ENCODE measurements at regions of chr17 and their contacts with region 1.

Region 1: GRCh38 chr17:56819431-56820145 is 14.1 kb downstream of the C17orf67 start:
- DNase-seq: peak; percentile 69 to 78 (median 71)
- H3K4me3 ChIP-seq: no peak overlapping the region
- H3K4me3 Mint-ChIP-seq: no peak overlapping the region
- H3K27ac ChIP-seq: no peak overlapping the region
- H3K27ac Mint-ChIP-seq: peak overlapping the region in 1 of 7 donors; percentile 29
- H3K4me1 ChIP-seq: peaks cover 4% of the 10 kb centered on the region
- H3K4me1 Mint-ChIP-seq: peaks cover 0 to 6% (median 4%) of the 10 kb centered on the region in 4 donors
- H3K27me3 ChIP-seq: no peaks in the 10 kb centered on the region
- H3K27me3 Mint-ChIP-seq: no peaks in the 10 kb centered on the region

Region 2: DNA sequence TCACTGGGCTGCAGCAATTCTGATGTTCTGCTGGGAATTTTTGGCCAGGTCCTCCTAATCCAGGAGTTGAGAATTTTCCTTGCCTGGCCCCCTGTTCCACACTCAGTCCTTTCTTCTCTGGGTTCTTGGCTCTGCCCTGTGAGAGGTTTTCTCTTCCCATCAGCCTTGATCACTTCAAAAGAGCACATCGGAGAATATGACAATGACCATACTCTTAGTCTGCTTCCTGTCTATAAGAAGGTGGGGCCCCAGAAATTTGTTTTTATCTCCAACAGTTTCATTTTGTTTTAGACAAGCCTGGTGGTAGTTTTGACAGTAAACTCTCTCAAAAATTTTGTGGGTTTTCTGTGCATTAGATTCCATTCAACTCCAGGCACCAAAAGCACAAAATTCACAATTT is 56.6 kb before region 1 on chr17:
- CTCF ChIA-PET with region 1: no interaction called
- POLR2A ChIA-PET with region 1: no interaction called
- intact Hi-C with region 1: no loop called
- DNase-seq: no peak
- H3K4me3 ChIP-seq: no peak overlapping the region
- H3K4me3 Mint-ChIP-seq: peak overlapping the region in 1 of 8 donors; percentile 48
- H3K27ac ChIP-seq: no peak overlapping the region
- H3K27ac Mint-ChIP-seq: peak overlapping the region in 1 of 7 donors; percentile 74
- H3K4me1 ChIP-seq: no peaks in the 10 kb centered on the region
- H3K4me1 Mint-ChIP-seq: peaks cover 0 to 6% (median 2%) of the 10 kb centered on the region in 4 donors
- H3K27me3 ChIP-seq: peaks cover 4% of the 10 kb centered on the region
- H3K27me3 Mint-ChIP-seq: peaks cover 1 to 7% of the 10 kb centered on the region in 2 donors

Region 3: DNA sequence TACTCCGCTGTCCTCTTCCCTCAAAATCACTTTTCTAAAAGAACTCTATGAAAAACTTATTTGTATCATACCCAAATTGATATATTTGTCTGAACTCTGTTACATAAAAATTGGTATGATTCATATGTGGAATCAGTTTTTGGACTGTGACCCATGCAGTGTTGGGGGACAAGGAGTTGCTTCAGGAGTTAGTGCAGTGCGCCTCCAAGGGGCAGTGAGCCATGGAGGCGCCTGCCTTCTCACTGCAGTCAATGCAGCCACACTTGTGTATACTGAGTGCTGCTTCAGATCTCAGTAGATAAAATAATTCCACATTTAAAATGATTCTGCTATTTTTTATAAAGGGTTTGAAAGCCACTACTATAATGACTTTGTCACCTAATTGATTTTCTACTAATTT is 46.9 kb after region 1 on chr17:
- CTCF ChIA-PET with region 1: interaction called, 11 read pairs
- POLR2A ChIA-PET with region 1: no interaction called
- intact Hi-C with region 1: loop called (anchors 1 kb)
- DNase-seq: no peak
- H3K4me3 ChIP-seq: no peak overlapping the region
- H3K4me3 Mint-ChIP-seq: no peak overlapping the region
- H3K27ac ChIP-seq: no peak overlapping the region
- H3K27ac Mint-ChIP-seq: no peak overlapping the region
- H3K4me1 ChIP-seq: no peaks in the 10 kb centered on the region
- H3K4me1 Mint-ChIP-seq: peaks cover 0 to 3% (median under 1%) of the 10 kb centered on the region in 4 donors
- H3K27me3 ChIP-seq: no peaks in the 10 kb centered on the region
- H3K27me3 Mint-ChIP-seq: no peaks in the 10 kb centered on the region

Region 4: DNA sequence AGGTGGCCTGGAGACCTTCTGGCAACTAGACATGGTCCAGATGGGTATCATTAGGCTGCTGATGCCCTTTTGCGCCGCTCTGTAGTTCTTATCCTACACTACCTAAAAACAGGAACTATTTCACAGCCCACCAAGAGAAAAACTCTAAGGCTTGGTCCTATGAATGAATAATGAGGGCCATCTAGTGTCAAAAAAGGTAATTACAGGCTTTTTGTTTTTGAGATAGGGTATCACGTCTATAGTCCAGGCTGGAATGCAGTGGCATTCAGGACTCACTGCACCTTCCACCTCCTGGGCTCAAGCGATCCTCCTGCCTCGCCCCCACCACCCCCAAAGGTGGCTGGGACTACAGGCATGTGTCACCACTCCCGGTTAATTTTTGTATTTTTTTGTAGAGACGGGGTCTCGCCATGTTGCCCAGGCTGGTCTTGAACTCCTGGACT is 120.3 kb after region 1 on chr17:
- CTCF ChIA-PET with region 1: interaction called, 172 read pairs
- POLR2A ChIA-PET with region 1: no interaction called
- intact Hi-C with region 1: loop called (anchors 1 kb)
- DNase-seq: peak in 4 of 5 donors; percentile 42 to 57 (median 53)
- H3K4me3 ChIP-seq: no peak overlapping the region
- H3K4me3 Mint-ChIP-seq: no peak overlapping the region
- H3K27ac ChIP-seq: no peak overlapping the region
- H3K27ac Mint-ChIP-seq: peak overlapping the region in 3 of 7 donors; percentile 51 to 81 (median 59)
- H3K4me1 ChIP-seq: no peaks in the 10 kb centered on the region
- H3K4me1 Mint-ChIP-seq: peaks cover 0 to 5% (median 0%) of the 10 kb centered on the region in 4 donors
- H3K27me3 ChIP-seq: no peaks in the 10 kb centered on the region
- H3K27me3 Mint-ChIP-seq: no peaks in the 10 kb centered on the region